ENCODE measurements at regions of chr17 and their contacts with region 1.

Region 1: GRCh38 chr17:79915850-79916430 is 76.7 kb upstream of the CBX4 start:
- DNase-seq: peak; percentile 80
- ATAC-seq: peak; percentile 48
- H3K4me3 ChIP-seq: no peak overlapping the region
- H3K27ac ChIP-seq: no peak overlapping the region
- H3K4me1 ChIP-seq: peaks cover 33% of the 10 kb centered on the region
- H3K27me3 ChIP-seq: no peaks in the 10 kb centered on the region
- CTCF ChIP-seq: peak; percentile 55; the same call in 1 of the 2 replicates

Region 2: DNA sequence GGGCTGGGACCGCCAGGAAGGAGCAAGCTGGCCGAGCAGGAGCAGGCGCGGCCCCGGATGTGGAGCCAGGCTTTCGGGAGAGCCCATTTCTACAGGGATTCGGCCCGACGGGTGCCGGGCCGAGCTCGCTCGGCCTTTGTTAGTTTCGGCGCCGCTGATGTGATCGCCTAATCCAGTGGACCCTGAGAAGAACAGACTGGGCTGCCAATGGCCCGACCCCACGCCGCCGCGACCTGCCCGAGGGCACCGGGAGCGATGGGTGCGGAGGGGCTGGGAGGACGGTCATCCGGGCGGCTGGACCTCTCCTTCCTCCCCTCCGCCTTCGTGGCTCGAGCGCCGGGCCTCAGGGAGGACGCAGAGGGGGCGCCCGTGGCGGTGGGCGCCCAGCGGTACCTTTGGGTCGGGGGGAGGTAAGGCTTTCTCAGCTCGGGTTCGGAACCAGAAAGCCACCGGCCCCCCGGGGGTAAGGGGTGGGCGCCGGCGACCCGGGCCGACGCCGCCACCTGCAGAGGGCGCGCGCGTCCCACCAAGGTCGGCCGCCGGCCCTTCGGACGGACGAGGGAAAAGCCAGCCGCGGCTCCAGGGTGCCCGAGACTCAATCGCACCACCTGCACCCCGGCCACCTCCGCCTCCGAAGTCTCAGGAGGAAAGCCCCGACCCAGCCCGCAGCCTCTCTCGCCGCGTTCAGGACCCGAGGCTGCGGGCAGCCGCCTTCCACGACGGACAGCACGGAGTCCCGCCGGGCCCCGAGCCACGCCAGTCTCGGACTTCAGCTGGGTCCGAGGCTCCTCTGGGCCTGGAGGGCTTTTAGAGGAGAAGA is 126.2 kb before region 1 on chr17:
- CTCF ChIA-PET with region 1: no interaction called
- POLR2A ChIA-PET with region 1: no interaction called
- intact Hi-C with region 1: loop called (anchors 5 kb)
- DNase-seq: peak; percentile 65
- ATAC-seq: peak; percentile 70
- H3K4me3 ChIP-seq: peak overlapping the region; percentile 67
- H3K27ac ChIP-seq: no peak overlapping the region
- H3K4me1 ChIP-seq: peaks cover 8% of the 10 kb centered on the region
- H3K27me3 ChIP-seq: peaks cover 9% of the 10 kb centered on the region; the same call in 1 of the 2 replicates
- CTCF ChIP-seq: peak; percentile 92

Region 3: DNA sequence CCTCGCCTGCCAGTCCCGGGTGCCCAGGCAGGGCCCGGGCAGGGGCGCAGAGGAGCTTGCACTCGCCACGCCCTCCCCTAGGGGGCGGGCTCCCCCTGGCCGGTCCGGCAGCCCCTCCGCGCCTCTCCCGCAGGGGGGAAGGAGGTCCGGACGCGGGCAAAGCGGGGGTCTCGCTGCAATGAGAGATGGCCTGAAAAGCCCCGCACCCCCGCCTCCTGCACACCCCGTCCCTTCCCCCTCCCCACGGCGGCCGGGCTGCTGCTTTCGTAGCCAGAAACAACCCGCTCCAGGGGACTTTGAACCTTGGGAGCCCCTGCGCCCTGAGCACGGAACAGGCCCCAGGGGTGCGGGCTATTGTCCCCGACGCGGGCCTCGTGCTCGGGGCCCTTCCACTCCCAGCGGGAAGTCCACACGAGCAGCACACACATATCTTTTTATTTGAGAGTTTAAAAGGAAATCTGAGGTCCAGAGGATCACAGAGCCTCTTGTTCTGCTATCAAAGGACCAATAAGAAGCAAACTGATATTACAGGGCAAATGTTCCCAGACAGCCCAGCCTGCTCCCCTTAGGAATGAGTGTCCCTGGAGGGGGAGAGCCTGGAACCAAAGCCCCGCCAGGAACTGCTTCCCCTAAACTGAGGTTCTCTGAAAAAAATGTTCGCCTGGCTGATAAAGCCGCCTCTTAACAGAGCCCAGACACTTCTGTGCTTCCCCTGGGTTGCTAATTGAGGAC is 70.9 kb before region 1 on chr17:
- CTCF ChIA-PET with region 1: interaction called, 4 read pairs
- POLR2A ChIA-PET with region 1: interaction called, 9 read pairs
- intact Hi-C with region 1: loop called (anchors 2 kb)
- DNase-seq: peak; percentile 63
- ATAC-seq: peak; percentile 55
- H3K4me3 ChIP-seq: peak overlapping the region; percentile 82
- H3K27ac ChIP-seq: no peak overlapping the region
- H3K4me1 ChIP-seq: peaks cover 28% of the 10 kb centered on the region
- H3K27me3 ChIP-seq: peaks cover 38% of the 10 kb centered on the region
- CTCF ChIP-seq: peak; percentile 72

Region 4: GRCh38 chr17:79960788-79961522 is 45.0 kb after region 1 on chr17:
- CTCF ChIA-PET with region 1: interaction called, 3 read pairs
- POLR2A ChIA-PET with region 1: no interaction called
- intact Hi-C with region 1: loop called (anchors 2 kb)
- DNase-seq: peak; percentile 94
- ATAC-seq: peak; percentile 95
- H3K4me3 ChIP-seq: peak overlapping the region; percentile 13
- H3K27ac ChIP-seq: peak overlapping the region; percentile 74
- H3K4me1 ChIP-seq: peaks cover 13% of the 10 kb centered on the region
- H3K27me3 ChIP-seq: no peaks in the 10 kb centered on the region
- CTCF ChIP-seq: 0 out of 2 replicates have a peak, but pooled peaks have one; percentile 11

Region 5: DNA sequence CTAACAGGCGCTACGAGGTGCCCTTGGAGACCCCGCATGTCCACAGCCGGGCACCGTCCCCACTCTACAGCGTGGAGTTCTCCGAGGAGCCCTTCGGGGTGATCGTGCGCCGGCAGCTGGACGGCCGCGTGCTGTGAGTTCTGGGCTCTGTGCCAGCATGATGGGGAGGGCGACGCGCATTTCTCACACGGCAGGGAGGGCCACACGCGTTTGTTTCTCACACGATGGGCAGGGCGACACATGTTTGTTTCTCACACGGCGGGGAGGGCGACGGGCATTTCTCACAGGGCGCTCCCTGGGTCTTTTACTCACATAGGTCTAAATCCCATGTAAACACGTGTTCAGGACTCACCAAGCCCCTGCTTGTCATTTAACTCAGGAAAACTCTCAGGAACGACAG is 189.8 kb after region 1 on chr17:
- CTCF ChIA-PET with region 1: no interaction called
- POLR2A ChIA-PET with region 1: no interaction called
- intact Hi-C with region 1: no loop called
- DNase-seq: no peak
- ATAC-seq: no peak
- H3K4me3 ChIP-seq: no peak overlapping the region
- H3K27ac ChIP-seq: no peak overlapping the region
- H3K4me1 ChIP-seq: peaks cover 13% of the 10 kb centered on the region
- H3K27me3 ChIP-seq: no peaks in the 10 kb centered on the region
- CTCF ChIP-seq: no peak

Region 6: GRCh38 chr17:80169784-80170500 is 254.0 kb after region 1 on chr17 and contains the start of gene CARD14:
- CTCF ChIA-PET with region 1: no interaction called
- POLR2A ChIA-PET with region 1: no interaction called
- intact Hi-C with region 1: no loop called
- DNase-seq: peak; percentile 91
- ATAC-seq: peak; percentile 91
- H3K4me3 ChIP-seq: peak within 1 kb of the TSS; percentile 57
- H3K27ac ChIP-seq: no peak within 1 kb of the TSS
- H3K4me1 ChIP-seq: peaks cover 10% of the 10 kb centered on the region
- H3K27me3 ChIP-seq: no peaks in the 10 kb centered on the region
- CTCF ChIP-seq: no peak
- total RNA-seq, gene CARD14: 2.3 and 4.4 TPM in 2 replicates

Measured in PC-3 (cell line).